ENCODE measurements at regions of chr6 and their contacts with region 1.

Region 1: DNA sequence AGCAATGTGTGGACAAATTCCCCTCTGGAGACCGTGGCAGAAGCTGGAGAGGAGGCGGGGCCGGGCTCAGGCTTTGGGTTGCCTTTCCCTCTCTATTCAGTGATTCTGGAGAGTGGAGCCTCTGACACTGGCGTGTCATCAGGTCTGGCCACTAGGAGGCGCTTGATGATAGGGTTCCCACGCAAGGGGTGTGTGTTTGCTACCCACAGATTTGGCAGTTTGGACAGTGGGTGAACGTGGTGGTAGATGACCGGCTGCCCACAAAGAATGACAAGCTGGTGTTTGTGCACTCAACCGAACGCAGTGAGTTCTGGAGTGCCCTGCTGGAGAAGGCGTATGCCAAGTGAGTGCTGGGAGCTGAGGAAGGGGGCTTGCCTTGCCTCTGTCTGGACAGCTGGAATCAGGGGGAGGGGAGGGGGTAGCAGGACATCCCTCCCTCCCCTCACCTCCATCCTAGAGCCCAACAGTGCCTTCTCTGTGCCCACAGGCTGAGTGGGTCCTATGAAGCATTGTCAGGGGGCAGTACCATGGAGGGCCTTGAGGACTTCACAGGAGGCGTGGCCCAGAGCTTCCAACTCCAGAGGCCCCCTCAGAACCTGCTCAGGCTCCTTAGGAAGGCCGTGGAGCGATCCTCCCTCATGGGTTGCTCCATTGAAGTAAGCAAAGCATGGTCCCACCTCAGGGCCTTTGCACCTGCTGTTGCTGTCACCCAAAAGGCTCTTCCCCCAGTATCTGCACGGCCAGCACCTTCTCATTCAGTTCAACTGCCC is 14.3 kb downstream of the CAPN11 start:
- DNase-seq: peak; percentile 93 to 95
- H3K4me3 ChIP-seq: no peak overlapping the region
- H3K27ac ChIP-seq: peak overlapping the region; percentile 4 to 27 (median 24)
- H3K4me1 ChIP-seq: peaks cover 2 to 13% of the 10 kb centered on the region in 2 donors
- H3K27me3 ChIP-seq: no peaks in the 10 kb centered on the region
- CTCF ChIP-seq: peak; percentile 64 to 98 (median 89)
- POLR2A ChIP-seq: no peak

Region 2: GRCh38 chr6:44201638-44202303 is 28.9 kb after region 1 on chr6:
- intact Hi-C with region 1: no loop called
- DNase-seq: peak; percentile 35 to 69
- H3K4me3 ChIP-seq: no peak overlapping the region
- H3K27ac ChIP-seq: peak overlapping the region in 1 of 3 donors; percentile 10
- H3K4me1 ChIP-seq: peaks cover 3 to 8% of the 10 kb centered on the region in 2 donors
- H3K27me3 ChIP-seq: no peaks in the 10 kb centered on the region
- CTCF ChIP-seq: no peak
- POLR2A ChIP-seq: peak in 1 of 2 donors; percentile 34

Region 3: DNA sequence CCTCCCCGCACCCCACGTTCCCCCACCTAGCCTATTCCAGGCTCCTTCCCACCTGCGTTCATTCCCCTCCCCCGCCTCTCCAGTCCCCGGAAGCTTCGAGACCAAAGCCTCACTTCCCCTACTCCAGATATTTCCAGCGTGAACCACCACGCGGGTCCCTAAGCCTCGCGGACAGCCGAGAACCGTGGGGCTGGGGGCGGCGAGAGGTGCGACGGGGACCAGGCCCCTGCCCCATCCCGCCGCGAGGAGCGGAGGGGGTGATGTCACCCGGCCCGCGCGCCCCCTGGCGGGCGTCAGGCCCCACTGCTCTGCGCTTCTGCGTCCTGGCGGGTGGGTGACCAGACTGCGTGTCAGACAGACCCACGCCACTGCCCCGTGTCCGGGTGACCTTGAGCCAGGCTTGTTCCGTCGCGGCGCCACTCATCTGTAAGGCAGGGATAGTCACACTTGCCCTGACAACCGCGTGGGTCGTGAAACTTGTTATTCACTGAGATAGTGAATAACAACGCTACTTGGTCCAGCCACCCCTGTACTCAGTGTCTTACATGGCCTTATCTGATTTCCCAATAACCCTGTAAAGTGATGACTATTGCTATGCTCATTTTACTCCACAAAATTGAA is 65.0 kb after region 1 on chr6:
- intact Hi-C with region 1: loop called (anchors 5 kb)
- DNase-seq: peak; percentile 80 to 84
- H3K4me3 ChIP-seq: peak overlapping the region in 2 of 3 donors; percentile 55 to 85
- H3K27ac ChIP-seq: peak overlapping the region; percentile 96 to 99 (median 97)
- H3K4me1 ChIP-seq: peaks cover 31 to 34% of the 10 kb centered on the region in 2 donors
- H3K27me3 ChIP-seq: no peaks in the 10 kb centered on the region
- CTCF ChIP-seq: peak; percentile 93 to 98 (median 96)
- POLR2A ChIP-seq: peak; percentile 10 to 44

Region 4: GRCh38 chr6:44257025-44257752 is 84.3 kb after region 1 on chr6 and contains the start of gene SLC35B2:
- intact Hi-C with region 1: loop called (anchors 5 kb)
- DNase-seq: peak; percentile 70 to 81
- H3K4me3 ChIP-seq: peak within 1 kb of the TSS; percentile 43 to 95 (median 92)
- H3K27ac ChIP-seq: peak within 1 kb of the TSS; percentile 81 to 97 (median 94)
- H3K4me1 ChIP-seq: peaks cover 5 to 15% of the 10 kb centered on the region in 2 donors
- H3K27me3 ChIP-seq: no peaks in the 10 kb centered on the region
- CTCF ChIP-seq: peak in 4 of 6 experiments; percentile 56 to 98 (median 83)
- POLR2A ChIP-seq: peak in 1 of 2 donors; percentile 66
- total RNA-seq, gene SLC35B2: 28.5 to 46.5 (median 41.8) TPM

Measured in thyroid gland (tissue), 4 donors.